ENCODE measurements at regions of chr17 and their contacts with region 1.

Region 1: GRCh38 chr17:30000001-30000754 is 58.7 kb downstream of the EFCAB5 start:
- DNase-seq: no peak
- H3K4me3 Mint-ChIP-seq: no peak overlapping the region
- H3K27ac Mint-ChIP-seq: no peak overlapping the region
- H3K4me1 Mint-ChIP-seq: peaks cover 9% of the 10 kb centered on the region
- H3K27me3 Mint-ChIP-seq: no peaks in the 10 kb centered on the region
- CTCF ChIP-seq: no peak

Region 2: DNA sequence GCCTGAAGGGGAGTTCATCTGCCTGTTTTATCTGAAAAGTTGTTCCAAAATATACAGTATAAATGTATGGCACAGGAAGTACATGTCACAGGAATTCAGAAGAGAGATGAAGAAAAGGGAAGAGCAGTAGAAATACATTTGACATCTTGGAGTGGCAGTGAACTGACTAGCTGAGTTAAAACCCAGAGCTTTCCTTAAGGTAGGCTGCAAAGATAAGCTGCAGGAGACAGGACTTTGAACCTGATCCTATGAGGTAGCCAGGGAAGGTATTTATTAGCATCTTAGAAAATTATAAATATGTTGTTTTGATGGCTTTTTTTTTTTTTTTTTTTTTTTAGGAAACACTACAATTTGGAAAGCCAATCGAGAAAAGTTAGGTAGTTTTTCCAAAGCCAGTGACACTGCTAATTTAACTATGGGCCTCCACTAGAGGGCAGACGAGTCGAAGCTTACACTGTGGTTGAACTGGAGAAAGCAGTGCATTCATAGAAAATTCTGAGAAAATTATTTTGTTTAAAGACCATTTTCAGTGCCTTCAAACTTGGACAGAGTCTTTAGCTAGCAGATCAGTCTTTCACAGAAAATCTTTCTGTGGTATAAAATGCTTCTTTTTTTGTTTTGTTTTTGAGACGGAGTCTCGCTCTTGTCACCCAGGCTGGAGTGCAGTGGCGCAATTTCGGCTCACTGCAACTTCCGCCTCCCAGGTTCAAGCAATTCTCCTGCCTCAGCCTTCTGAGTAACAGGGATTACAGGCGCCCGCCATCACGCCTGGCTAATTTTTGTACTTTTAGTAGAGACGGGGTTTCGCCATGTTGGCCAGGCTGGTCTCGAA is 192.4 kb before region 1 on chr17:
- CTCF ChIA-PET with region 1: no interaction called
- intact Hi-C with region 1: loop called (anchors 10 kb)
- DNase-seq: peak; percentile 81
- H3K4me3 Mint-ChIP-seq: no peak overlapping the region
- H3K27ac Mint-ChIP-seq: no peak overlapping the region
- H3K4me1 Mint-ChIP-seq: no peaks in the 10 kb centered on the region
- H3K27me3 Mint-ChIP-seq: no peaks in the 10 kb centered on the region
- CTCF ChIP-seq: peak; percentile 47

Region 3: DNA sequence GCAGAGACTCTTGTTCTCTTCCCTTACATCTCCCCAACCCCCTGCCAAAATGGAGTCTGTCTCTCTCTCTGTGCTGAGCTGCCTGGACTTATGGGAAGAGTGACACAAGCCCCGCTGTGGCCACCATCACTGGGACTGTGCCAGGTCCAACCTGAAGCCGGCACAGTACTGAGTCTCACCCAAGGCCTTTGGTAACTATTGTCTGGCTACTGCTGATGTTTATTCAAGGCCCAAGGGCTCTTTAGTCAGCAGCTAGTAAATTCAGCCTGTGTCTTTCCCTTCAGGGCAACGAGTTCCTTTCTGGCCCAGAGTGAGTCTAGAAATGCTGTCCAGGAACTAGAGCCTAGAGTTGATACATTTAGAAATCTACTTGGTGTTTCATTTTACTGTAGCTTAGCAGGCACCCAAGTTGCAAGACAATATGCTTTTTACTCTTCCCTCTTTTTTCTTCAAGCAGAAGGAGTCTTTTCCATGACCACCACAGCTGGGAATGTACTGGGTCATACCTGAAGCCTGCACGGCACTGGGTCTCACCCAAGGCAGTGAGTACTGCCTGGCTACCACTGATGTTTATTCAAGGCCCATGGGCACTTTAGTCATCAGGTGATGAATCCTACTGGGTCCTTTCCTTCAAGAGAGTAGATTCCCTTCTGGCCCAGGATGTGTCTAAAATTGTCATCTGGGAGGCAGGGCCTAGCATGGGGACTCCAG is 41.1 kb before region 1 on chr17:
- CTCF ChIA-PET with region 1: no interaction called
- intact Hi-C with region 1: no loop called
- DNase-seq: no peak
- H3K4me3 Mint-ChIP-seq: no peak overlapping the region
- H3K27ac Mint-ChIP-seq: no peak overlapping the region
- H3K4me1 Mint-ChIP-seq: no peaks in the 10 kb centered on the region
- H3K27me3 Mint-ChIP-seq: no peaks in the 10 kb centered on the region
- CTCF ChIP-seq: no peak

Region 4: DNA sequence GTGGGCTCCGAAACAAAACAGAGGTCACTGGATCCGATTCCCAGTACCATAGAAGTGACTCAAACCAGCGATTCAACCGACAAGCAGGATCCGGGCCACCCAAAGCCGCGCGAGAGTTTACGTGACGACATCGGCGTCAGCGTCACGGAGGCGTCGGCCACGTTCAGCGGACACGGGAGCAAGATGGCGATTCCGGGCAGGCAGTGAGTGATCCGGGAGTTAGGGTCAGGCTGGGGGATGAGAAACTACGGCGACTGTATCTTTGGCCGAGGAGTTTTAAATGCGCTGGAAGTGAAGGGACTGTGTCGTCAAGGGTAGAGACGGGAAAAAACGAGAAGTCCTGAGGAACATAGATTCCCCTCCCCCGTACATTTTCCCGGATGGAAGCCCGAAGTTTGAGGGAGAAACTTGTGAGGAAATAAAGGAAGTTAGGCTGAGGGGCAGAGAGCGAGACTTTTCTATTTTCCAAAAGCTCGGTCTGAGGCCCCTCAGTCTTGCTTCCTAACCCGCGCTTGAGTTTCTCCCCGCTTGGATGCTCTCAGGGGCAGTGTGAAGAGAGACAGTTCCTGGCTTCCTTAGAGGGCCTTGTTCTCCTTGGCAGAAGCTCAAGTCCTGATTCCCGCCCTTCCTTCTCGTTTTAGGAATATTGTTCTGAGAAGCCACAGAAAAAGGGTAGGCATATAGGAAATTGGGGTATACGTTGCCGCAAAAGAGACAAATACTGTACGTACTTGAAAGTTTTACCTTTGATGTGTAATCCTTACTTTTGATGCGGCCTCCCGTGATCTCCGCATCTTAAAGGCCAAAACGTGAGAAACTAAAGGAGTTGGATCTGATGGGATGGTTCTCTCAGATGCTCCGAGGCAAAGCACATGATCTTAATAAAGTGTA is 116.7 kb after region 1 on chr17 and contains the start of gene NSRP1:
- CTCF ChIA-PET with region 1: no interaction called
- intact Hi-C with region 1: no loop called
- DNase-seq: peak; percentile 95
- H3K4me3 Mint-ChIP-seq: peak within 1 kb of the TSS; percentile 98
- H3K27ac Mint-ChIP-seq: peak within 1 kb of the TSS; percentile 100
- H3K4me1 Mint-ChIP-seq: peaks cover 11% of the 10 kb centered on the region
- H3K27me3 Mint-ChIP-seq: no peaks in the 10 kb centered on the region
- CTCF ChIP-seq: no peak
- total RNA-seq, gene NSRP1: 27.5 and 29.7 TPM in 2 replicates